GM23248 (cell line): ENCODE measurements at regions of chr4 and their contacts with region 1.

Region 1: GRCh38 chr4:78517050-78517652 is 34.4 kb upstream of the ANXA3 start:
- DNase-seq: peak; percentile 70
- H3K4me3 ChIP-seq: no peak overlapping the region
- H3K27ac ChIP-seq: no peak overlapping the region
- H3K4me1 ChIP-seq: peaks cover 11% of the 10 kb centered on the region
- H3K27me3 ChIP-seq: no peaks in the 10 kb centered on the region

Region 2: GRCh38 chr4:77959566-77960338 is 557.4 kb before region 1 on chr4:
- in situ Hi-C with region 1: loop called (anchors 25 kb)
- DNase-seq: peak; percentile 73
- H3K4me3 ChIP-seq: no peak overlapping the region
- H3K27ac ChIP-seq: no peak overlapping the region
- H3K4me1 ChIP-seq: no peaks in the 10 kb centered on the region
- H3K27me3 ChIP-seq: no peaks in the 10 kb centered on the region